Activated naive CD4-positive, alpha-beta T cell treated with anti-CD3 and anti-CD28 coated beads, Interleukin-2, amount 10 ng/mL, durations not matched to agents 7 days and 5 days (primary cell): ENCODE measurements at regions of chr7 and their contacts with region 1.

Region 1: GRCh38 chr7:158976849-158977593 is 120.7 kb downstream of the DYNC2I1 start:
- DNase-seq: peak; percentile 93
- H3K4me3 Mint-ChIP-seq: peak overlapping the region; percentile 69
- H3K27ac Mint-ChIP-seq: peak overlapping the region; percentile 83
- H3K4me1 Mint-ChIP-seq: peaks cover 20% of the 10 kb centered on the region
- H3K27me3 Mint-ChIP-seq: peaks cover 4% of the 10 kb centered on the region

Region 2: GRCh38 chr7:158695726-158696452 is 281.1 kb before region 1 on chr7:
- CTCF ChIA-PET with region 1: interaction called, 38 read pairs
- DNase-seq: peak; percentile 61
- H3K4me3 Mint-ChIP-seq: no peak overlapping the region
- H3K27ac Mint-ChIP-seq: peak overlapping the region; percentile 81
- H3K4me1 Mint-ChIP-seq: peaks cover 57% of the 10 kb centered on the region
- H3K27me3 Mint-ChIP-seq: no peaks in the 10 kb centered on the region

Region 3: GRCh38 chr7:158782761-158783401 is 194.1 kb before region 1 on chr7:
- CTCF ChIA-PET with region 1: interaction called, 12 read pairs
- DNase-seq: peak; percentile 30
- H3K4me3 Mint-ChIP-seq: no peak overlapping the region
- H3K27ac Mint-ChIP-seq: no peak overlapping the region
- H3K4me1 Mint-ChIP-seq: peaks cover 5% of the 10 kb centered on the region
- H3K27me3 Mint-ChIP-seq: no peaks in the 10 kb centered on the region

Region 4: GRCh38 chr7:158871318-158871717 is 105.7 kb before region 1 on chr7:
- CTCF ChIA-PET with region 1: no interaction called
- DNase-seq: no peak
- H3K4me3 Mint-ChIP-seq: no peak overlapping the region
- H3K27ac Mint-ChIP-seq: no peak overlapping the region
- H3K4me1 Mint-ChIP-seq: peaks cover 19% of the 10 kb centered on the region
- H3K27me3 Mint-ChIP-seq: no peaks in the 10 kb centered on the region

Region 5: GRCh38 chr7:158885624-158886023 is 91.4 kb before region 1 on chr7:
- CTCF ChIA-PET with region 1: interaction called, 23 read pairs
- DNase-seq: no peak
- H3K4me3 Mint-ChIP-seq: no peak overlapping the region
- H3K27ac Mint-ChIP-seq: no peak overlapping the region
- H3K4me1 Mint-ChIP-seq: no peaks in the 10 kb centered on the region
- H3K27me3 Mint-ChIP-seq: no peaks in the 10 kb centered on the region